CD8-positive, alpha-beta T cell (primary cell): ENCODE measurements at regions of chr2 and their contacts with region 1.

Region 1: DNA sequence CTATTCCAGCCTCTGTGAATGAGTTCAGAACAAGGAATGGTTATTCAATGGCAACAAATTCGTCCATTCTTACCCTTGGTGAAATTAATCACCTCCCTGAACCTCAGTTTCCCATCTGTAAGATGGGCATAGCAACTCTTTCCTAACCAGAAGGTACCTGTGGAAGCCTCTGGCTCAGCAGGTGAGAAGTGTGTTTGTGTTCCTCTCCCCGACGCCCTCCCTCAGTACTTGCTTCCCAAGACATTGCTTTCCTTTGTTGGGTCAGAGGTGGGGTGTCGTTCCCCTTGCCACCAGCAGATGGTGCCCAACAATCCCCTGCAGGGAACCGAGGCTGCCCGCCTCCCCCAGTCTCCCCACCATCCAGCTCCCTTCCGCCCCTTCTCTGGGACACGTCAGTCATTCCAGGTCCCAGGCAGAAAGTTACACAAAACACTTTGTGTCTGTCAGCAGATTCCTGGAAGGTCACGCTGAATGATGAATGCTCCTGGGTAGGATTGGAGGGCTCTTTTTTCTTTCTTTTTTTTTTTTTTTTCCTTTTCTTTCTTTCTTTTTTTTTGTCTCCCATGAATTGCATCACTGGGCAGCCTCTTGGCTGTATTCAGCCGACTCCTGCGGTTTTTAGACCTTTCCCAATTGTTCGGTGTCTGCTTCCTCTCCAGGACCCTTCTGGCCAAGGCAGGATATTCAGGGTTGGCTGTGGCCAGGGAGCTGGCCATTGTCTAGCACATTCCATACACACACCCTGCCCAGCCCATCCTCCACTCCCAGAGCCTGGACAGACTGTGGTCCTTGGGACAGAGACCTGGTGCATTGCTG is 117.3 kb downstream of the LPIN1 start:
- DNase-seq: peak; percentile 27 to 81 (median 68)
- ATAC-seq: peak; percentile 93
- H3K4me3 ChIP-seq: no peak overlapping the region
- H3K4me3 Mint-ChIP-seq: peak overlapping the region; percentile 27
- H3K27ac ChIP-seq: no peak overlapping the region
- H3K27ac Mint-ChIP-seq: no peak overlapping the region
- H3K4me1 ChIP-seq: peaks cover 3% of the 10 kb centered on the region
- H3K4me1 Mint-ChIP-seq: peaks cover 12% of the 10 kb centered on the region
- H3K27me3 ChIP-seq: no peaks in the 10 kb centered on the region
- H3K27me3 Mint-ChIP-seq: peaks cover 2% of the 10 kb centered on the region
- CTCF ChIP-seq: peak; percentile 97

Region 2: DNA sequence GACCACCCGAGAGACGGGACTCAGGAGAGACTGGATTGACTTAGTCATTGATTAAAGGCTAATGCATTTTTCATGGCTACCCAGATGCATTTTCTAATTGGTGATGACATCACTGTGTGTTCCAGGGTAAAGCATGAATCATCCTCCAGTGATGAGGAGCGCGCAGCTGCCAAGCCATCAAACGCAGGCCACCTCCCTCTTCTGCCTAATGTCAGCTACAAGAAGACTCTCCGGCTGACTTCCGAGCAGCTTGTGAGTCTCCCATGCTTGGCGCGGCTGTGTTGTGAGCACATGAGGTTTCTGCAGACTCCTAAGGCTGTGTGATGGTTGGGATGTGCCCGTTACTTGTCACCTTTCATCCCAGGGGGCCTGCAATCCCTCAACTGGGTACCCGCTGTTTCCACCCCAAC is 60.9 kb before region 1 on chr2:
- CTCF ChIA-PET with region 1: no interaction called
- POLR2A ChIA-PET with region 1: no interaction called
- intact Hi-C with region 1: no loop called
- DNase-seq: no peak
- ATAC-seq: no peak
- H3K4me3 ChIP-seq: no peak overlapping the region
- H3K4me3 Mint-ChIP-seq: no peak overlapping the region
- H3K27ac ChIP-seq: no peak overlapping the region
- H3K27ac Mint-ChIP-seq: no peak overlapping the region
- H3K4me1 ChIP-seq: no peaks in the 10 kb centered on the region
- H3K4me1 Mint-ChIP-seq: no peaks in the 10 kb centered on the region
- H3K27me3 ChIP-seq: no peaks in the 10 kb centered on the region
- H3K27me3 Mint-ChIP-seq: no peaks in the 10 kb centered on the region
- CTCF ChIP-seq: no peak

Region 3: DNA sequence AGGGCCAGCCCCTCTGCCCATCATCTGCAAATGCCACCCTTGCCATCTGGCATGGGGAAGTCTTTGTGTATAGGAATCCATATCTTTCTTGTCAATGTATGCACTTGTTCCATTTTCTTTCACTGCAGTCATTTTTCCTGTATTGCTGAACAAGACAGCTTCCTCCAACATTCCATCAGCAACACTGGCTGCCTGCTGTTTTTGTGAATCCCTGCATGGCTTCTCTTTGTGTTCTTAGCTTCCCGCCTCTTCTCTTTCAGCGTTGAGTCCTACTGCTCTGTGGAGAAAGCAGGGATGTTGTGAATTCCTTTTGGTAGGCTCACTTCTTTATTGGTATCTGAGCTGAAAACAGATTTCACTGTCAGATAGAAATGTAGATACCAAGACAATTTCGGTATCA is 32.7 kb after region 1 on chr2:
- CTCF ChIA-PET with region 1: no interaction called
- POLR2A ChIA-PET with region 1: no interaction called
- intact Hi-C with region 1: no loop called
- DNase-seq: no peak
- ATAC-seq: no peak
- H3K4me3 ChIP-seq: no peak overlapping the region
- H3K4me3 Mint-ChIP-seq: no peak overlapping the region
- H3K27ac ChIP-seq: no peak overlapping the region
- H3K27ac Mint-ChIP-seq: no peak overlapping the region
- H3K4me1 ChIP-seq: no peaks in the 10 kb centered on the region
- H3K4me1 Mint-ChIP-seq: no peaks in the 10 kb centered on the region
- H3K27me3 ChIP-seq: no peaks in the 10 kb centered on the region
- H3K27me3 Mint-ChIP-seq: no peaks in the 10 kb centered on the region
- CTCF ChIP-seq: no peak

Region 4: GRCh38 chr2:11912980-11913379 is 49.3 kb after region 1 on chr2:
- CTCF ChIA-PET with region 1: no interaction called
- POLR2A ChIA-PET with region 1: no interaction called
- intact Hi-C with region 1: no loop called
- DNase-seq: no peak
- ATAC-seq: no peak
- H3K4me3 ChIP-seq: no peak overlapping the region
- H3K4me3 Mint-ChIP-seq: no peak overlapping the region
- H3K27ac ChIP-seq: no peak overlapping the region
- H3K27ac Mint-ChIP-seq: no peak overlapping the region
- H3K4me1 ChIP-seq: no peaks in the 10 kb centered on the region
- H3K4me1 Mint-ChIP-seq: no peaks in the 10 kb centered on the region
- H3K27me3 ChIP-seq: no peaks in the 10 kb centered on the region
- H3K27me3 Mint-ChIP-seq: no peaks in the 10 kb centered on the region
- CTCF ChIP-seq: no peak

Region 5: DNA sequence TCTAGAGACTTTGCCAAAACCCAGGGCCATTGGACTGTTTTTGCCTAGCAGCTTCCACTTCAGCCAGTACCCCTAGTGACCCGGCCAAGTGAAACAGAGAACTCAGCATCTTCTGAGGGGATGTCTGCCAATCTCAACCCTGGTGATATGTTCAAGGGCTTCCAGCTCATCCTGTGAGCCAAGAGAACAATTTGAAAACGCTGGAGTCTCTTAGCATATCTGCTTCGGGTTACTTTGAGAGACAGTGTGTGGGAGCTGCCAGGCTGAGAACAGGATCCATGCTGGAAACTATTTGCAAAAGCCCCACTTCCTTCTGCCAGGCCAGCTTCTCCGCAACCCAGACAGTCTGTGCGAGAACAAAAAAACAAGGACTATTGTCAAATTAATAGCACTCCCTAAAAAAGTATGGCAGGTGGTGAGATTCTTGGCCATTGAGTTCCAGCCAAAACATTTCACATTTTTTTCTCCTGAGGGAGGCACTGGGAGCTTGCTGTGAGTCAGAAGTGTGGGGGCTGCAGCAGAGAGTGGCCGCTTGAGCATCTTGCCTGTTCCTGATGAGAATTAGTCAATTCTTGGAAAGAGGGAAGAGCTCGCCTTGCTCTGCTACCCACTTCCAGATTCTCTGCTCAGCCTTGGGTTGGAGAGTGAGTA is 457.4 kb after region 1 on chr2:
- CTCF ChIA-PET with region 1: interaction called, 9 read pairs
- POLR2A ChIA-PET with region 1: no interaction called
- intact Hi-C with region 1: loop called (anchors 2 to 10 kb)
- DNase-seq: no peak
- ATAC-seq: no peak
- H3K4me3 ChIP-seq: no peak overlapping the region
- H3K4me3 Mint-ChIP-seq: no peak overlapping the region
- H3K27ac ChIP-seq: no peak overlapping the region
- H3K27ac Mint-ChIP-seq: no peak overlapping the region
- H3K4me1 ChIP-seq: no peaks in the 10 kb centered on the region
- H3K4me1 Mint-ChIP-seq: no peaks in the 10 kb centered on the region
- H3K27me3 ChIP-seq: no peaks in the 10 kb centered on the region
- H3K27me3 Mint-ChIP-seq: no peaks in the 10 kb centered on the region
- CTCF ChIP-seq: no peak

Region 6: GRCh38 chr2:12326449-12327190 is 462.9 kb after region 1 on chr2:
- CTCF ChIA-PET with region 1: interaction called, 9 read pairs
- POLR2A ChIA-PET with region 1: no interaction called
- intact Hi-C with region 1: loop called (anchors 2 to 10 kb)
- DNase-seq: peak in 3 of 9 experiments; percentile 10 to 46 (median 20)
- ATAC-seq: no peak
- H3K4me3 ChIP-seq: no peak overlapping the region
- H3K4me3 Mint-ChIP-seq: no peak overlapping the region
- H3K27ac ChIP-seq: no peak overlapping the region
- H3K27ac Mint-ChIP-seq: no peak overlapping the region
- H3K4me1 ChIP-seq: no peaks in the 10 kb centered on the region
- H3K4me1 Mint-ChIP-seq: no peaks in the 10 kb centered on the region
- H3K27me3 ChIP-seq: no peaks in the 10 kb centered on the region
- H3K27me3 Mint-ChIP-seq: no peaks in the 10 kb centered on the region
- CTCF ChIP-seq: no peak

Region 7: GRCh38 chr2:12416600-12416999 is 552.9 kb after region 1 on chr2:
- CTCF ChIA-PET with region 1: interaction called, 5 read pairs
- POLR2A ChIA-PET with region 1: no interaction called
- intact Hi-C with region 1: loop called in 1 of 2 experiments (anchors 1 kb)
- DNase-seq: peak; percentile 34 to 78 (median 58)
- ATAC-seq: peak; percentile 62
- H3K4me3 ChIP-seq: no peak overlapping the region
- H3K4me3 Mint-ChIP-seq: no peak overlapping the region
- H3K27ac ChIP-seq: no peak overlapping the region
- H3K27ac Mint-ChIP-seq: peak overlapping the region; percentile 5
- H3K4me1 ChIP-seq: peaks cover 20% of the 10 kb centered on the region
- H3K4me1 Mint-ChIP-seq: peaks cover 34% of the 10 kb centered on the region
- H3K27me3 ChIP-seq: no peaks in the 10 kb centered on the region
- H3K27me3 Mint-ChIP-seq: no peaks in the 10 kb centered on the region
- CTCF ChIP-seq: peak; percentile 43